T-cell (primary cell): ENCODE measurements at regions of chr14 and their contacts with region 1.

Region 1: GRCh38 chr14:35404449-35405303 is at the start of gene NFKBIA:
- DNase-seq: peak; percentile 76 to 97 (median 94)
- ATAC-seq: peak; percentile 69 to 75 (median 75)
- H3K4me3 ChIP-seq: peak within 1 kb of the TSS; percentile 74 to 80
- H3K4me3 Mint-ChIP-seq: peak within 1 kb of the TSS; percentile 91 to 94 (median 93)
- H3K27ac ChIP-seq: peak within 1 kb of the TSS; percentile 96
- H3K27ac Mint-ChIP-seq: peak within 1 kb of the TSS; percentile 97 to 98
- H3K4me1 ChIP-seq: peaks cover 35 to 46% of the 10 kb centered on the region in 2 experiments
- H3K4me1 Mint-ChIP-seq: peaks cover 54 to 61% (median 56%) of the 10 kb centered on the region in 3 donors
- H3K27me3 ChIP-seq: no peaks in the 10 kb centered on the region
- H3K27me3 Mint-ChIP-seq: no peaks in the 10 kb centered on the region
- total RNA-seq, gene NFKBIA: 129 to 1,245 (median 169) TPM

Region 2: DNA sequence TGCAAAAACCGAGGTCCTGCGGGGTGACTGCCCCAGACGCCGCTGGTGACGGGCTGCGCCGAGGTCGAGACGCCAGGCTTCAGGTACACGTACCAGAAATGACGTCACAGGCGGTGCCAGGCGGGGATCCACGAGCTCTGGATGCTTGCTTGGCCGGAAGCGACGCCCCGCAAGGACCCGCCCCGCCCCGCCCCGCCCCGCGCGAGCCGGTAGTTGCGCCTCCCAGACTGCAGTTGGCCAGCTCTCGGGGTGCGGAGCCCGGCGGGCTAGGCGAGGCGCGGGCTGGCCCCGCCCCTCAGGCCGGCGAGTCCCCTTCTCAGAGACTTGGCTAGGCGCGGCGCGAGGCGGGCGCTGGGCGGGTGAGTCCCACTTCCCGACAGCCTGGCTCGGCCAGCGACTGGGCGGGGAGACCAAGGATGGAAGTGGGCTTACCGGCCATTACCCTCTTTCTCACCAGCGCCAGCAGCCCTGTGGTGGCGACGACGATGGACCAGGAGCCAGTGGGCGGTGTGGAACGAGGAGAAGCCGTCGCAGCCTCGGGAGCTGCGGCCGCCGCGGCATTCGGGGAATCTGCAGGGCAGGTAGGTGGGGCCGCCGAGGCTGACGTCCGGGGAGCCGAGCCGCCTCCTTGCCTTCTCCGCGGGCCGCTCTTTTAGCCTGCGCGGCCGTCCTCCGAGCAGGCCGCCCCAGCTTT is 358.5 kb before region 1 on chr14 and contains the start of gene FAM177A1:
- CTCF ChIA-PET with region 1: interaction called in 1 of 2 experiments, 6 read pairs
- POLR2A ChIA-PET with region 1: interaction called, 3 to 31 read pairs
- DNase-seq: peak; percentile 93 to 100 (median 100)
- ATAC-seq: peak; percentile 83 to 93 (median 91)
- H3K4me3 ChIP-seq: peak within 1 kb of the TSS; percentile 71 to 91
- H3K4me3 Mint-ChIP-seq: peak within 1 kb of the TSS; percentile 73 to 88 (median 85)
- H3K27ac ChIP-seq: peak within 1 kb of the TSS; percentile 99
- H3K27ac Mint-ChIP-seq: peak within 1 kb of the TSS; percentile 95 to 96
- H3K4me1 ChIP-seq: peaks cover 4 to 12% of the 10 kb centered on the region in 2 experiments
- H3K4me1 Mint-ChIP-seq: peaks cover 25 to 31% (median 27%) of the 10 kb centered on the region in 3 donors
- H3K27me3 ChIP-seq: no peaks in the 10 kb centered on the region
- H3K27me3 Mint-ChIP-seq: no peaks in the 10 kb centered on the region
- total RNA-seq, gene FAM177A1: 35.7 to 141 (median 38.7) TPM

Region 3: DNA sequence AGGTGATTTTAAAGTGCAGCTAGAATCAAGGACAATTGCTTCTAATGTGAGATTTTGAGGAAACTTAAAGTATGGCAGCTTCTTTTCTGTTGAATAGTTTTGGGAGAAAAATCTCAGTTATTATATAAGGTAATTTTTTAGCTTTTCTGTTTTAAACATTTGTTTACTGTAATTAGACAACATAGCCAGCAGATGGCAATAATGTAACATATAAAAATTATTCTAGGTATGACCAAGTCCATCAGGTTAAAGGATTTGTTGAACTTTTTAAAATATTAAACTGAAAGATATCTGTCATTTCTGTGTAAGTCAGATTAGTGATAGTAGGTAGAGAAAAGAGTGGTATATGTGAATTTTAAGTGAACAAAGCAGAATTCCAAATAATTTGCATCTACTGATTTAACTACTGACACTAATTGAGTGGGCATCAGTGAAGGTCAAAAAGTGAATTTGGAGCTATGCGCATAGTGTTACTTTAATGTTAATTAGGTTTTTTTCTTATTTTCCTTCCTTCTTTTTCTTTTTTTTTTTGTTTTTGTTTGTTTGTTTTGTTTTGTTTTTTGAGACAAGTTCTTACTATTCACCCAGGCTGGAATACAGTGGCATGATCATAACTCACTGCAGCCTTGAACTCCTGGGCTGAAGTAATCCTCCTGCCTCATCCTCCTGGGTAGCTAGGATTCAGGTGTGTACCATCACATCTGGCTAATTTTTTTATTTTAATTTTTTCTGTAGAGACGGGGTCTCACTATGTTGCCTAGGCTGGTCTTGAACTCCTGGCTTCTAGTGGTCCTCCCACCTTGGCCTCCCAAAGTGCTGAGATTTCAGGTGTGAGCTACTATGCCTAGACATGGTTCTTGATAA is 263.7 kb before region 1 on chr14:
- CTCF ChIA-PET with region 1: interaction called, 18 to 21 read pairs
- POLR2A ChIA-PET with region 1: interaction called, 3 to 18 read pairs
- DNase-seq: peak in 1 of 35 experiments; percentile 37
- ATAC-seq: peak in 1 of 4 experiments; percentile 57
- H3K4me3 ChIP-seq: no peak overlapping the region
- H3K4me3 Mint-ChIP-seq: no peak overlapping the region
- H3K27ac ChIP-seq: peak overlapping the region; percentile 44
- H3K27ac Mint-ChIP-seq: peak overlapping the region; percentile 35 to 80
- H3K4me1 ChIP-seq: no peaks in the 10 kb centered on the region
- H3K4me1 Mint-ChIP-seq: peaks cover 24 to 34% (median 24%) of the 10 kb centered on the region in 3 donors
- H3K27me3 ChIP-seq: no peaks in the 10 kb centered on the region
- H3K27me3 Mint-ChIP-seq: no peaks in the 10 kb centered on the region

Region 4: DNA sequence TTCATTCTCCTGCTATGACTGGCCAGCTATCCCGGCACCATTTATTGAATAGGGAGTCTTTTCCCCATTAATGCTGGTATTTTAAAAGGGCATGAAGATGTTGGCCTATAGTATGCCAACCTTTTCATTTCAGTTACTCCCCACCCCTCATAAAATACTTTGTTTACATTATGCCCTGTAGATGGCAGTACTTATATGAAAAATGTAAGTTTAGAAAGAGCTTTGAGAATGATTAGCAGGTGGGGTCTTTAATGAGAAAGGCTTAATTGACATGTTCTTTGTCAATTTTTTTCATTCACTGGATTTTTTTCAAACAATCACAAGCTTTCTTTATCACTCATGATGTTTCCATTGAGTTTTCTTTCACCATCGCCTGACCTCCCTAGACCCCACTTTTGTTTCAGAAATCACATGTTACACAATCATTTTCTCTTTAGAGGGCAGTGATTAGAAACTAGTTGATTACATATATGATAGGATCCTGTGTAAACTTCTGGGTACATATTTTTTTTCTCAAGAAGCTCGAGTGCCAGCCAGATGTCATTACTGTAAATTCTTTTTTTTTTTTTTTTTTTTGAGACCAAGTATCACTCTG is 175.1 kb before region 1 on chr14:
- CTCF ChIA-PET with region 1: interaction called, 6 to 20 read pairs
- POLR2A ChIA-PET with region 1: interaction called, 3 to 4 read pairs
- DNase-seq: peak in 1 of 35 experiments; percentile 47
- ATAC-seq: peak in 2 of 4 experiments; percentile 38 to 55
- H3K4me3 ChIP-seq: no peak overlapping the region
- H3K4me3 Mint-ChIP-seq: no peak overlapping the region
- H3K27ac ChIP-seq: no peak overlapping the region
- H3K27ac Mint-ChIP-seq: no peak overlapping the region
- H3K4me1 ChIP-seq: peaks cover 4 to 10% of the 10 kb centered on the region in 2 experiments
- H3K4me1 Mint-ChIP-seq: peaks cover 19 to 31% (median 20%) of the 10 kb centered on the region in 3 donors
- H3K27me3 ChIP-seq: no peaks in the 10 kb centered on the region
- H3K27me3 Mint-ChIP-seq: no peaks in the 10 kb centered on the region

Region 5: GRCh38 chr14:35292051-35292769 is 112.5 kb before region 1 on chr14 and contains the start of gene PSMA6:
- CTCF ChIA-PET with region 1: interaction called, 5 to 37 read pairs
- POLR2A ChIA-PET with region 1: interaction called, 17 to 49 read pairs
- DNase-seq: peak; percentile 97 to 100 (median 99)
- ATAC-seq: peak; percentile 94 to 98 (median 96)
- H3K4me3 ChIP-seq: peak within 1 kb of the TSS; percentile 83 to 98
- H3K4me3 Mint-ChIP-seq: peak within 1 kb of the TSS; percentile 99
- H3K27ac ChIP-seq: peak within 1 kb of the TSS; percentile 88
- H3K27ac Mint-ChIP-seq: peak within 1 kb of the TSS; percentile 97 to 98
- H3K4me1 ChIP-seq: peaks cover 26 to 38% of the 10 kb centered on the region in 2 experiments
- H3K4me1 Mint-ChIP-seq: peaks cover 44 to 52% (median 52%) of the 10 kb centered on the region in 3 donors
- H3K27me3 ChIP-seq: no peaks in the 10 kb centered on the region
- H3K27me3 Mint-ChIP-seq: no peaks in the 10 kb centered on the region
- total RNA-seq, gene PSMA6: 93.6 to 109 (median 96.9) TPM

Region 6: GRCh38 chr14:35374273-35374681 is 30.4 kb before region 1 on chr14:
- CTCF ChIA-PET with region 1: interaction called, 4 to 12 read pairs
- POLR2A ChIA-PET with region 1: interaction called, 3 to 7 read pairs
- DNase-seq: no peak
- ATAC-seq: no peak
- H3K4me3 ChIP-seq: no peak overlapping the region
- H3K4me3 Mint-ChIP-seq: no peak overlapping the region
- H3K27ac ChIP-seq: no peak overlapping the region
- H3K27ac Mint-ChIP-seq: no peak overlapping the region
- H3K4me1 ChIP-seq: peaks cover 0 to 4% of the 10 kb centered on the region in 2 experiments
- H3K4me1 Mint-ChIP-seq: peaks cover 0 to 5% (median 0%) of the 10 kb centered on the region in 3 donors
- H3K27me3 ChIP-seq: peaks cover 0 to 3% of the 10 kb centered on the region in 2 experiments
- H3K27me3 Mint-ChIP-seq: no peaks in the 10 kb centered on the region